BJ (cell line): ENCODE measurements at regions of chr20 and their contacts with region 1.

Region 1: DNA sequence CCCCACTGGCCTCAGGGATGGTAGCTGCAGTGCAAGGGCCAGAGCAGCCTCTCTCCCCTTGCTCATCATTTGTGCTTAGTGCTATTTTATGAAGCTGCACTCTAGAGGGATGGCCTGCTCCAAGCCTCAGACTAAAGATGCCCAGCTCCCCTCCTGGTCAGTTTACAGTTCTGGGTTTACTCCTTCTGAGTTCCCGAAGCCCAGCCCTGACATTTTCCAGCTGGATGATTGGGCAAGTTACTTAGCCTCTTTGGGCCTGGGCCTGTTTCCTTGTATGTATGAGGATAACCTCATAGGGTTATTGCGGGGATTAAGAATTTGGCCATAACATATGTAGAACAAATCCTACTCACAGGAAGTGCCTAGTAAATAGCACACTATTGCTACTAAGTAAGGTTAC is 31.8 kb upstream of the EMILIN3 start:
- DNase-seq: no peak
- H3K4me3 ChIP-seq: no peak overlapping the region
- H3K27me3 ChIP-seq: no peaks in the 10 kb centered on the region
- CTCF ChIP-seq: 0 out of 2 replicates have a peak, but pooled peaks have one; percentile 3

Region 2: GRCh38 chr20:41411391-41411847 is 13.0 kb after region 1 on chr20:
- CTCF ChIA-PET with region 1: interaction called, 14 read pairs
- POLR2A ChIA-PET with region 1: no interaction called
- DNase-seq: no peak
- H3K4me3 ChIP-seq: no peak overlapping the region
- H3K27me3 ChIP-seq: no peaks in the 10 kb centered on the region
- CTCF ChIP-seq: peak; percentile 41